Left cardiac atrium (tissue), 4 donors: ENCODE measurements at regions of chrX and their contacts with region 1.

Region 1: DNA sequence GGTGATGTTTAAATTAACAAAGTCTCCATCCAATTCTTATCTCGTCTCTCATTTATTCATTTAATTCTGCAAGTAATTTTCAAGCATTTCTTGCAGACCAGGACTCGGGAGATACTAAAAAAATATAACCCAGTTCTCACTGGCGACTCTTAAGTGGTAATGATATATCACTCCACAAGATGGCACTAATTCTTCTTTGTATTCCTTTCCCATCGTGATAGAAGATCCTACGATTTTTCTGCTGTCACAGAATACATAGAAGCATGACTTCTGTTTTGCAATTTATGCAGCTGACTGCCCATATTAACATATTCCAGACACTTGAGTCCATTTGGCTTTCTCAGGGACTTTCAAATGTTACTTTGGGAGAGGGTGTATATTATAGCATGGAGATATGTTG is 64.0 kb upstream of the FGF13 start:
- DNase-seq: no peak
- ATAC-seq: no peak

Region 2: DNA sequence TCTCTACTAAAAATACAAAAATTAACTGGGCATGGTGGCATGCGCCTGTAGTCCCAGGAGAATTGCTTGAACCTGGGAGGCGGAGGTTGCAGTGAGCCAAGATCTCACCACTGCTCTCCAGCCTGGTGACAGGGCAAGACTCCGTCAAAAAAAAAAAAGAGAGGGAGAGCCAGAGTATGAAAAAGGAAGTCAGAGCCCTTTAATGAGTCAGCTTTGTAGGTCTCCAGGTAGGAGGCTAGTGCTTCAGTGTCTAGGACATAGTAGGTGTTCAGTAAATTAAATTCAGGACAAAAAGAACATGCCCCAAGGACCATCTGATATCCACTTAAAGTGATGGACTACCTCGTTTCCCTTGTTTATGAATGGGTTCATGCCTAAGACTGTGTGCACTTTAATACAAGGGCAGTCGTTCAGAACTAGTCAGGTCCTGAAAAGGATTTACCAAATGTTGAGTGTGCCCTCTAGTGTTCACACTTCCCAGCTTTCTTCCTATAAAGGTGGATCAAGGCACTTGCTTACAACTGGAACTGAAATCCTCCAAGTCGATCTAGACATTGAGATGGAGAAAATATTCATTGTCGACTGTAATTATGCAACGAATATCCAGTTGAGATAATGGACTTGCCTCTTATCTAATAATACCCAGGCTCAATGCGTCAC is 784.0 kb after region 1 on chrX:
- intact Hi-C with region 1: loop called (anchors 5 to 10 kb)
- DNase-seq: no peak
- ATAC-seq: no peak